IMR-90 (cell line): ENCODE measurements at regions of chr15 and their contacts with region 1.

Region 1: GRCh38 chr15:90869601-90870353 is 1.4 kb downstream of the FURIN start:
- DNase-seq: peak; percentile 84
- ATAC-seq: peak; percentile 24
- H3K4me3 ChIP-seq: no peak overlapping the region
- H3K27ac ChIP-seq: peak overlapping the region; percentile 48
- H3K4me1 ChIP-seq: peaks cover 33% of the 10 kb centered on the region
- H3K27me3 ChIP-seq: no peaks in the 10 kb centered on the region; the same call in 1 of the 2 replicates
- CTCF ChIP-seq: no peak
- POLR2A ChIP-seq: no peak
- RAD21 ChIP-seq: no peak

Region 2: DNA sequence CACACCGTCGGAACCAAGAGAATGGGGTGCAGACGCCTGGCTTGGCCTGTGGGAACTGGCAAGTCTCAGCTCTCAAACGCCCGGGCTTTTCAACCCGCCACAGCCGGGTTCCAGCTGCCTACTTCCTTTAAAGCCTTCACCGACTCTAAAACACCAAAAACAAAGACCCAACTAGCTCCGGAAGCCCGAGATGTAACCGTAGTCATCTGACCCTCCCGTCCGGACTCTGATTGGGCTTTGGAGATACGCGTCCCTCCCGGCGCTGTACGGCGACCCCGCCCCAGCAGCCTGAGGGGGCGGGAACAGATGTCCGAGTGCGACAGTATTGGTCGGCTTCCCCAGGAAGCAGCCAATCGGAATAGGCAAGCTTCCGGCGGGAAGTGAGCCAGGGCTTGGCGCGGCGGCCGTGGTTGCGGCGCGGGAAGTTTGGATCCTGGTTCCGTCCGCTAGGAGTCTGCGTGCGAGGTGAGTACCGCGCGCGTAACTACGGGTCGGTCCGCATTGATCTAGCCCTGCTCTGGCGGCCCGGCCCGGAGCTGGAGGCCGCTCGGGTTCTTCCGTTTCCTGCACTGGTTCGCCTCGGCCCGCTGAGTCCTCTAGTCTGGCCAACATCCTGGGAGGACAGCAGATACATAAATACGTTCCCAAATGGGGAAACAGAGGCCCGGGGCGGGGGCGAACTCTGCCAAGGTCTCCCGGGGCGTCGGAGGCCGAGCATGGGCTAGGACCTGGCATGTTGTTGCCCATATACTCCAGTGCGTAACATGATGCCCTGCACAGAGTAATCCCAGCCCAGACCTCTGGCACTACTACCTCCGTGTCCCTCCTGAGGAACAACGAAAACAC is 152.6 kb before region 1 on chr15 and contains the start of gene BLM:
- CTCF ChIA-PET with region 1: no interaction called
- POLR2A ChIA-PET with region 1: no interaction called
- dilution Hi-C with region 1: no loop called
- in situ Hi-C with region 1: no loop called
- intact Hi-C with region 1: loop called (anchors 5 kb)
- DNase-seq: peak; percentile 97
- ATAC-seq: peak; percentile 100
- H3K4me3 ChIP-seq: peak within 1 kb of the TSS; percentile 63
- H3K27ac ChIP-seq: peak within 1 kb of the TSS; percentile 69
- H3K4me1 ChIP-seq: peaks cover 2% of the 10 kb centered on the region; the same call in 1 of the 2 replicates
- H3K27me3 ChIP-seq: no peaks in the 10 kb centered on the region
- CTCF ChIP-seq: peak; percentile 20; the same call in 1 of the 2 replicates
- POLR2A ChIP-seq: peak; percentile 84
- RAD21 ChIP-seq: no peak
- total RNA-seq, gene BLM: 6.5 and 7.2 TPM in 2 replicates